ENCODE measurements at regions of chr3 and their contacts with region 1.

Region 1: GRCh38 chr3:31472479-31473390 is 60.0 kb upstream of the STT3B start:
- DNase-seq: peak; percentile 17
- H3K4me3 Mint-ChIP-seq: no peak overlapping the region
- H3K27ac Mint-ChIP-seq: peak overlapping the region; percentile 59
- H3K4me1 Mint-ChIP-seq: peaks cover 19% of the 10 kb centered on the region
- H3K27me3 Mint-ChIP-seq: peaks cover 9% of the 10 kb centered on the region

Region 2: DNA sequence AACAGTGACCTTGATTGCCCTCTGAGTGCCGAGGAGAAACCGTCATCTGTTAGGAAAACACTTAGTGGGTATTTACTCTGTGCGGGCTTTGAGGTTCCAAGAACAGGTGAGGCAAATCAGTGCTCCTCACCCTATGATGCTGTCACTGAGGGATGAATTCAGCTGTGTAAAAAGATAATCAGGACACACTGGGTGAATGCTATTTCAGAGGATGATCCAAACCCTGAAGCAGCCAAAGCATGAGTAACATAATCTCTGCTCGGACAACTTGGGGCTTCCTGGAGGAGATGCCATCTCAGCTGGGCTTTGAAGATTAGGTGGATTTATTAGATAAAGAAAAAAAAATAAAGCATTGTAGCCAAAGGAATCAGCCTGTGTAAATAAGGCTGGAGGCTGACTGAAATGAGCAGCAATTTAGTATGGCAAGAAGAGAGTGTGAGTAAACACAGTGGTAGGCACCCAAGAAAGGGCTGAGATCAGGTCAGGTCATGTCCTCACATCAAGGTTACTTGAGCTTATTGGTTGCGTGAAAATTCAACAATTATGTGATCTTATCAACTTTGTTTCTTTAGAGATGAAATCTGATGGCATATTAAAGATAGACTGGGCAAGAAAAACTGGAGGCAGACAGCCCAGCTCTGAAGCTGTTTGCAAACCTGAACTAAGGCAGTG is 567.6 kb before region 1 on chr3:
- intact Hi-C with region 1: no loop called
- DNase-seq: no peak
- H3K4me3 Mint-ChIP-seq: no peak overlapping the region
- H3K27ac Mint-ChIP-seq: no peak overlapping the region
- H3K4me1 Mint-ChIP-seq: no peaks in the 10 kb centered on the region
- H3K27me3 Mint-ChIP-seq: peaks cover under 1% of the 10 kb centered on the region

Region 3: GRCh38 chr3:31213869-31214486 is 258.8 kb before region 1 on chr3:
- intact Hi-C with region 1: loop called (anchors 5 kb)
- DNase-seq: peak; percentile 53
- H3K4me3 Mint-ChIP-seq: peak overlapping the region; percentile 43
- H3K27ac Mint-ChIP-seq: peak overlapping the region; percentile 81
- H3K4me1 Mint-ChIP-seq: peaks cover 94% of the 10 kb centered on the region
- H3K27me3 Mint-ChIP-seq: no peaks in the 10 kb centered on the region

Region 4: GRCh38 chr3:31288641-31289100 is 184.1 kb before region 1 on chr3:
- intact Hi-C with region 1: loop called (anchors 2 kb)
- DNase-seq: peak; percentile 44
- H3K4me3 Mint-ChIP-seq: peak overlapping the region; percentile 46
- H3K27ac Mint-ChIP-seq: peak overlapping the region; percentile 87
- H3K4me1 Mint-ChIP-seq: peaks cover 49% of the 10 kb centered on the region
- H3K27me3 Mint-ChIP-seq: no peaks in the 10 kb centered on the region

Region 5: DNA sequence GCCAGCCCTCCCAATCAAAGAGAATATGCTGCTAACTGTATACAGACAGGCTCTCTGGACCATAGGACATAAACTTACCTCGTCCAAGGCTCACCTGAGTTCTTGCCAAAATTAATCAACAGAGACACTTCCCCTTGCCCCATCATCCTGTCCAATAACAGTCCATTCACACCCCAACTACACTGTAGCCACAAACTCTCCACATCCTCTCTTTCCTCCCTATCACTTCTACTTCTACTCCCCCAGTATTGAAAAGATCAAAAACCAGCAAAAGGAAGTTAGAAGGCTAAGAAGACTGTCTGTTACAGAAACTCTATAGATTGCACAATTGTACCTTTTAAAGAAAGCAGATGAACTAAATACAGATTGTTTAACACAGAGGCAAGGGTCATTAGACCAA is 73.5 kb before region 1 on chr3:
- intact Hi-C with region 1: loop called (anchors 2 kb)
- DNase-seq: no peak
- H3K4me3 Mint-ChIP-seq: no peak overlapping the region
- H3K27ac Mint-ChIP-seq: peak overlapping the region; percentile 7
- H3K4me1 Mint-ChIP-seq: peaks cover 16% of the 10 kb centered on the region
- H3K27me3 Mint-ChIP-seq: no peaks in the 10 kb centered on the region

Region 6: GRCh38 chr3:31448035-31448881 is 24.5 kb before region 1 on chr3:
- intact Hi-C with region 1: loop called (anchors 1 kb)
- DNase-seq: peak; percentile 4
- H3K4me3 Mint-ChIP-seq: no peak overlapping the region
- H3K27ac Mint-ChIP-seq: peak overlapping the region; percentile 13
- H3K4me1 Mint-ChIP-seq: peaks cover 30% of the 10 kb centered on the region
- H3K27me3 Mint-ChIP-seq: peaks cover 3% of the 10 kb centered on the region

Measured in activated T-helper 1 cell treated with anti-CD3 and anti-CD28 coated beads, Interleukin-12 subunit alpha, Interleukin-12 subunit beta, Interleukin-2, Interleukin-4 antibody, amounts not matched to agents 30 ng/mL and 10 ng/mL and 1 ng/mL, durations not matched to agents 14 hours and 24 hours and 36 hours (primary cell).